ENCODE measurements at regions of chr12 and their contacts with region 1.

Region 1: DNA sequence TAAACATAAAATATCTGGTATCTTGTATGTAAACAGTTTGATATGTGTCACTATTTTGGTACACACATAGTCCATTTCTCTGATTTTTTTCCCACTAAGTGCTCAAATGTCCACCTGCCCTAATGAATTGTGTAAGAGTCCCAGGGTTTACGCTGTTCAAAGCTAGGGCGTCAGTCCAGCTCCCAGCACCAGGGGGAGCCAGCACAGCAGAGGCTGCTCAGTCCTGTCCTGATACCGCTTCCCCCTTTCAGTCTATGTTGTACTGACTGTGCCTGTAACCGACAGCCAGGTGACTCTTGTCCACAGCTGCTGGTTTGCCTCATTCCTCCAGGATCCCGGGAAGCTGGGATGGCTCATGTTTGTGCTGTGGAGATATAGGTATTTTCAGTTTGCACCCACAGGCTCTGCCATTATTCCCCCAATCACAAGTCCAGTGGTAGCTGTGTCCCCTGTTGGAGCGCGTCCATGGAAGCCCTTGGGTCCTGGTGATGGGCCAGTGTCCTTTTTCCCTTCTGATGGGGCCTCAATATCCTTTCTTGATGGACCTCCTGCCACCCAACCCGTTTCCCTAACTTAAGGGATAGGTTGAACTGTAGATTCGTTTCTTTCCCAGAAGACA is 242.0 kb downstream of the NEDD1 start:
- DNase-seq: peak; percentile 72 to 85
- H3K4me3 ChIP-seq: no peak overlapping the region
- H3K4me3 Mint-ChIP-seq: no peak overlapping the region
- H3K27ac Mint-ChIP-seq: no peak overlapping the region
- H3K4me1 ChIP-seq: no peaks in the 10 kb centered on the region
- H3K4me1 Mint-ChIP-seq: no peaks in the 10 kb centered on the region
- H3K27me3 ChIP-seq: no peaks in the 10 kb centered on the region
- H3K27me3 Mint-ChIP-seq: peaks cover 9% of the 10 kb centered on the region
- CTCF ChIP-seq: peak; percentile 88 to 94

Region 2: GRCh38 chr12:96578526-96579125 is 570.4 kb before region 1 on chr12:
- CTCF ChIA-PET with region 1: no interaction called
- POLR2A ChIA-PET with region 1: no interaction called
- intact Hi-C with region 1: loop called (anchors 5 kb)
- DNase-seq: peak in 1 of 2 experiments; percentile 33
- H3K4me3 ChIP-seq: no peak overlapping the region
- H3K4me3 Mint-ChIP-seq: no peak overlapping the region
- H3K27ac Mint-ChIP-seq: no peak overlapping the region
- H3K4me1 ChIP-seq: no peaks in the 10 kb centered on the region
- H3K4me1 Mint-ChIP-seq: no peaks in the 10 kb centered on the region
- H3K27me3 ChIP-seq: no peaks in the 10 kb centered on the region
- H3K27me3 Mint-ChIP-seq: peaks cover 3% of the 10 kb centered on the region
- CTCF ChIP-seq: peak; percentile 45 to 54

Region 3: GRCh38 chr12:96980991-96981436 is 168.0 kb before region 1 on chr12:
- CTCF ChIA-PET with region 1: no interaction called
- POLR2A ChIA-PET with region 1: no interaction called
- intact Hi-C with region 1: no loop called
- DNase-seq: no peak
- H3K4me3 ChIP-seq: no peak overlapping the region
- H3K4me3 Mint-ChIP-seq: no peak overlapping the region
- H3K27ac Mint-ChIP-seq: no peak overlapping the region
- H3K4me1 ChIP-seq: peaks cover 5% of the 10 kb centered on the region; the same call in 1 of the 2 replicates
- H3K4me1 Mint-ChIP-seq: no peaks in the 10 kb centered on the region
- H3K27me3 ChIP-seq: no peaks in the 10 kb centered on the region; the same call in 1 of the 2 replicates
- H3K27me3 Mint-ChIP-seq: peaks cover 3% of the 10 kb centered on the region
- CTCF ChIP-seq: no peak

Region 4: GRCh38 chr12:97308576-97309198 is 159.6 kb after region 1 on chr12:
- CTCF ChIA-PET with region 1: interaction called, 3 read pairs
- POLR2A ChIA-PET with region 1: no interaction called
- intact Hi-C with region 1: loop called (anchors 1 kb)
- DNase-seq: peak in 1 of 2 experiments; percentile 45
- H3K4me3 ChIP-seq: no peak overlapping the region
- H3K4me3 Mint-ChIP-seq: no peak overlapping the region
- H3K27ac Mint-ChIP-seq: no peak overlapping the region
- H3K4me1 ChIP-seq: no peaks in the 10 kb centered on the region; the same call in 1 of the 2 replicates
- H3K4me1 Mint-ChIP-seq: peaks cover 6% of the 10 kb centered on the region
- H3K27me3 ChIP-seq: no peaks in the 10 kb centered on the region
- H3K27me3 Mint-ChIP-seq: no peaks in the 10 kb centered on the region
- CTCF ChIP-seq: peak; percentile 61 to 68

Region 5: GRCh38 chr12:97359021-97359690 is 210.1 kb after region 1 on chr12:
- CTCF ChIA-PET with region 1: no interaction called
- POLR2A ChIA-PET with region 1: no interaction called
- intact Hi-C with region 1: no loop called
- DNase-seq: no peak
- H3K4me3 ChIP-seq: no peak overlapping the region
- H3K4me3 Mint-ChIP-seq: no peak overlapping the region
- H3K27ac Mint-ChIP-seq: no peak overlapping the region
- H3K4me1 ChIP-seq: no peaks in the 10 kb centered on the region
- H3K4me1 Mint-ChIP-seq: no peaks in the 10 kb centered on the region
- H3K27me3 ChIP-seq: no peaks in the 10 kb centered on the region
- H3K27me3 Mint-ChIP-seq: peaks cover 5% of the 10 kb centered on the region
- CTCF ChIP-seq: no peak

Region 6: DNA sequence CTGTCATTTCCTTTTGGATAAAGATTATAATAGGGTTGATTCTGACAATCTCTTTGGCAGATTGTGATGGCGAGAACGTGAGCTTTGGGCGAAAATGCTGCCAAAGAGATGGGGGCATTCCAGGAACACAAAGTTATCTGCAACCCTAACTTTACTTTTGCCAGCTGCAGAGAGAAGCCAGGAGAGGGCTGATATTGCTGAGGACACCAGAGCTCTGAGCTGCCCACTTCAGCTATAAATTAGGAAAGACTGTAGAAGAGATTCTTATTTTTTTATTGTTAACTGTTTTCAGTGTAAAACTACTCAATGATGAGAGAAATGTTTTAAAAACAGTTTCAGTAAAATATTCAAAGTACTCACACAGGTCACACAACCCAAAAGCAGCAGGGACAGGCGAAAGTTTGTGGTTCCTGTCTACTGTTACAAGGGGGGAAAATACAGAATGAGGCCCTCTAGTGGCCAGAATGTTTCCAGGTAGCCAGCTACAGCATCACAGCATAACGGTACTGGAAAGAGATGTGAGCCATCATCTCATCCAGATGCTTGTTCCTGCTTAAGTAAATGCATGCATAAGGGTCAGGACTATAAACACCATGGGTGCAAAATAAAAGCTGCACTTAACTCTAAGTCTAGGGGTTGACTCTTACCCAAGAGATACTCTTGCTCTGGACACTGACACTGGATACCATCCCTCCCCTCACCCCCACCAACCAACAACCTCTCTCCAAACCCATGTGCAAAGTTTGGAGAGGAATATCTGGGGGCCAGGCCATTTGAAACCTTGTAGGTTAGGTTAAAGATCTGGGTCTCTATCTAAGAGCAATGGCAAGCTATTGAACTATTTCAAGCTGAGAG is 811.9 kb after region 1 on chr12:
- CTCF ChIA-PET with region 1: no interaction called
- POLR2A ChIA-PET with region 1: no interaction called
- intact Hi-C with region 1: loop called (anchors 1 kb)
- DNase-seq: peak in 1 of 2 experiments; percentile 43
- H3K4me3 ChIP-seq: no peak overlapping the region
- H3K4me3 Mint-ChIP-seq: no peak overlapping the region
- H3K27ac Mint-ChIP-seq: no peak overlapping the region
- H3K4me1 ChIP-seq: no peaks in the 10 kb centered on the region
- H3K4me1 Mint-ChIP-seq: no peaks in the 10 kb centered on the region
- H3K27me3 ChIP-seq: no peaks in the 10 kb centered on the region
- H3K27me3 Mint-ChIP-seq: no peaks in the 10 kb centered on the region
- CTCF ChIP-seq: peak; percentile 54 to 72

Region 7: DNA sequence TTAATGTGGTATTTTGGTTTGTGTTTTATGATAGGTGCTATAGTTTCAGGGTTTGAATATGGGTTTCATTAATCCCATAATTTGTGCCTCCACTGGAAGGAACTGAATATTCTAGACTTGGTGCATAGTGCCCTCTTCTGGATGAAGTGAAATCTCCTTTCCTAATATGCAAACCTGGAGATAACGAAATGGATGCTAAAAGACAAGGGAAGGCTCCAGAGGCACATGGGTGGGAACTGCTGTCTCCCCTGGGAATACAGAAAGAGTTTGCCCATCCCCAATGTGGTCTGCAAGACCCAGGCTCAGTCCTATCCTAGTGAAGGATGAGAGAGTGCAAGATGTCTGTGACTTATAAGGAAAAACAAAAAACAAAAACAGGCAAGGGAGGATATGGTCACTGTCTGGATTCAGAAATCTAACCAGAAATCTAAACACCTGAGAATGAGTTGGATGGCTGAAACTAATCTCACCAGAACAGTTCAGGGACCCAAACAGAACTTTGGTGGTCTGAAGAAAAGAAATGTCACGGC is 1224.0 kb after region 1 on chr12:
- CTCF ChIA-PET with region 1: no interaction called
- POLR2A ChIA-PET with region 1: no interaction called
- intact Hi-C with region 1: loop called (anchors 1 kb)
- DNase-seq: peak in 1 of 2 experiments; percentile 56
- H3K4me3 ChIP-seq: no peak overlapping the region
- H3K4me3 Mint-ChIP-seq: no peak overlapping the region
- H3K27ac Mint-ChIP-seq: no peak overlapping the region
- H3K4me1 ChIP-seq: no peaks in the 10 kb centered on the region
- H3K4me1 Mint-ChIP-seq: peaks cover 7% of the 10 kb centered on the region
- H3K27me3 ChIP-seq: no peaks in the 10 kb centered on the region
- H3K27me3 Mint-ChIP-seq: peaks cover 1% of the 10 kb centered on the region
- CTCF ChIP-seq: peak; percentile 54 to 68

Measured in Caco-2 (cell line).